Breast epithelium (tissue), 4 donors: ENCODE measurements at regions of chr16 and their contacts with region 1.

Region 1: GRCh38 chr16:79863128-79864031 is 262.8 kb upstream of the MAF start:
- DNase-seq: no peak
- H3K4me3 ChIP-seq: no peak overlapping the region
- H3K27ac ChIP-seq: no peak overlapping the region
- H3K4me1 ChIP-seq: no peaks in the 10 kb centered on the region
- H3K27me3 ChIP-seq: no peaks in the 10 kb centered on the region
- CTCF ChIP-seq: no peak
- POLR2A ChIP-seq: no peak

Region 2: DNA sequence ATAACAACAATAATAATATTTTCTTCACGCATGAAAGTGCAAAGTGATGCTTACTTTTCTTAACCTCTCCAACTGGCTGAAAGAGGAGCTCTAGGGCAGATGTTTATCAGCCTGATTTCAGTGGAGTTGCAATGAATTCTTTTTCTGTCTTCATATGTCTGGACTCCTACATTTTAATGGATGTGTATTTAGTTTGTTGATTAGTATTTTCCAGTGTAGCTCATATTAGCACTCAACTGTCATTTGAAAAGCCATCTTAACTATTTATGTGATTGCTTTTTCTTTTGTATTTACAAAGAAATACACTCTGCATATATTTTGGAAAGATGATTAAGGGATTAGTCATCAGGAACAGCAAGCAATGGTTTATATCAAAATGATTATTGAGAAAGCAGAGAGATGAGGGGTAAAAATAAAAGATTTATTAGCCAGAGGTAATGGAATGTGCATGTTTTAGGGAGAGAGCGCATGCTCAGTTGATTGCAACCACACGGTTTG is 1692.9 kb before region 1 on chr16:
- intact Hi-C with region 1: loop called (anchors 5 kb)
- DNase-seq: no peak
- H3K4me3 ChIP-seq: no peak overlapping the region
- H3K27ac ChIP-seq: no peak overlapping the region
- H3K4me1 ChIP-seq: peaks cover 0 to 4% of the 10 kb centered on the region in 2 donors
- H3K27me3 ChIP-seq: no peaks in the 10 kb centered on the region
- CTCF ChIP-seq: no peak
- POLR2A ChIP-seq: no peak

Region 3: DNA sequence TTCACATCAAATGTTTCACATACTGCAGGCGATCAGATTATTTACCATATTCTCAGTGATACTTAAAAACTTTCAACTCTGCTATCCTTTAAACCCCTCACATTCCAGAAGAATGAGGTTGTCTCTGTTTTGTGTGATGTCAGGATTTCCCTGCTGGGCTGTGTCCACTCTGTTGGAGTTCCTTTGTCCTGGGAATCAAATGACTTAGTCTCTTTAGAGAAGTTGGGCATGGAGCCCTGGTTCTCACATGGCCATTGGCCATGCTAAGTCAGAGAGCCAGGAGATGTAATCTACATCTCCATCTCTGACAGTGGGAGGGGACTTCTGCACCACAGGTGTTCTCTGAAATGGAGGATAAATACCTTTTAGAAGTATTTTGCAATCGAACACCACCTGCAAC is 57.8 kb before region 1 on chr16:
- intact Hi-C with region 1: no loop called
- DNase-seq: no peak
- H3K4me3 ChIP-seq: no peak overlapping the region
- H3K27ac ChIP-seq: no peak overlapping the region
- H3K4me1 ChIP-seq: no peaks in the 10 kb centered on the region
- H3K27me3 ChIP-seq: no peaks in the 10 kb centered on the region
- CTCF ChIP-seq: no peak
- POLR2A ChIP-seq: no peak

Region 4: GRCh38 chr16:79897453-79898146 is 34.2 kb after region 1 on chr16:
- intact Hi-C with region 1: no loop called
- DNase-seq: no peak
- H3K4me3 ChIP-seq: no peak overlapping the region
- H3K27ac ChIP-seq: peak overlapping the region in 1 of 2 donors; percentile 38
- H3K4me1 ChIP-seq: no peaks in the 10 kb centered on the region
- H3K27me3 ChIP-seq: no peaks in the 10 kb centered on the region
- CTCF ChIP-seq: no peak
- POLR2A ChIP-seq: no peak